T-cell (primary cell): ENCODE measurements at regions of chr1 and their contacts with region 1.

Region 1: DNA sequence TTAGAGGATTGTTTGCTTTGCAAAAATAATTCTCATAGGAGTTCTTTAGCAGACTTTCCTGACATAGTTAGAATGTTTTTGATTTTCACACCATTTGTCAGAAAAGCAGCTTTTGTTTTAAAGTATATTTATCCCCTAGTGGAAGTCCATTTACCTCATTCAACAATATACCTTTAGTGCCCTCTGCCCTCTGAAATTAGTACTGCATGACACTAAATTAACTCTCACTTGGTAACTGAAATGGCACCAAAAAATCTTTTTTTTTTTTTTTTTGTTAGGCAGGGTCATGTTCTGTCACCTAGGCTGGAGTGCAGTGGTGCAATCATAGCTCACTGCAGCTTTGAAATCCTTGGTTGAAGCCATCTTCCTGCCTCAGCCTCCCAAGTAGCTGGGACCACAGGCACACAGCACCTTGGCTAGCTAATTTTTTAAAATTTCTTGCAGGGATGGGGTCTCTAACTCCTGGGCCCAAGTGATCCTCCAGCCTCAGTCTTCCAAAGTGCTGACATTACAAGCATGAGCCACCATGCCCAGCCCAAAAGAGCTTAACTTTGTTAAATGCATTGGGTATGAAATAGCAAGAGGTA is 13.6 kb downstream of the LRRC42 start:
- DNase-seq: peak in 5 of 35 experiments; percentile 16 to 70 (median 24)
- ATAC-seq: peak in 3 of 4 experiments; percentile 46 to 74 (median 50)
- H3K4me3 ChIP-seq: no peak overlapping the region
- H3K4me3 Mint-ChIP-seq: no peak overlapping the region
- H3K27ac ChIP-seq: no peak overlapping the region
- H3K27ac Mint-ChIP-seq: no peak overlapping the region
- H3K4me1 ChIP-seq: no peaks in the 10 kb centered on the region
- H3K4me1 Mint-ChIP-seq: peaks cover 0 to 4% (median 2%) of the 10 kb centered on the region in 3 donors
- H3K27me3 ChIP-seq: no peaks in the 10 kb centered on the region
- H3K27me3 Mint-ChIP-seq: no peaks in the 10 kb centered on the region

Region 2: GRCh38 chr1:52636721-52637695 is 1322.7 kb before region 1 on chr1:
- CTCF ChIA-PET with region 1: no interaction called
- POLR2A ChIA-PET with region 1: no interaction called
- DNase-seq: peak; percentile 45 to 85 (median 65)
- ATAC-seq: peak; percentile 71 to 75 (median 72)
- H3K4me3 ChIP-seq: peak overlapping the region in 1 of 2 donors; percentile 22
- H3K4me3 Mint-ChIP-seq: peak overlapping the region; percentile 75 to 85 (median 83)
- H3K27ac ChIP-seq: peak overlapping the region; percentile 99
- H3K27ac Mint-ChIP-seq: peak overlapping the region; percentile 99 to 100
- H3K4me1 ChIP-seq: peaks cover 50 to 93% of the 10 kb centered on the region in 2 experiments
- H3K4me1 Mint-ChIP-seq: peaks cover 81 to 87% (median 83%) of the 10 kb centered on the region in 3 donors
- H3K27me3 ChIP-seq: no peaks in the 10 kb centered on the region
- H3K27me3 Mint-ChIP-seq: no peaks in the 10 kb centered on the region

Region 3: GRCh38 chr1:53860967-53861411 is 98.8 kb before region 1 on chr1:
- CTCF ChIA-PET with region 1: interaction called, 32 to 91 read pairs
- POLR2A ChIA-PET with region 1: no interaction called
- DNase-seq: peak in 34 of 35 experiments; percentile 5 to 78 (median 32)
- ATAC-seq: peak; percentile 50 to 75 (median 70)
- H3K4me3 ChIP-seq: no peak overlapping the region
- H3K4me3 Mint-ChIP-seq: no peak overlapping the region
- H3K27ac ChIP-seq: no peak overlapping the region
- H3K27ac Mint-ChIP-seq: no peak overlapping the region
- H3K4me1 ChIP-seq: no peaks in the 10 kb centered on the region
- H3K4me1 Mint-ChIP-seq: peaks cover 0 to 14% (median 7%) of the 10 kb centered on the region in 3 donors
- H3K27me3 ChIP-seq: no peaks in the 10 kb centered on the region
- H3K27me3 Mint-ChIP-seq: no peaks in the 10 kb centered on the region

Region 4: DNA sequence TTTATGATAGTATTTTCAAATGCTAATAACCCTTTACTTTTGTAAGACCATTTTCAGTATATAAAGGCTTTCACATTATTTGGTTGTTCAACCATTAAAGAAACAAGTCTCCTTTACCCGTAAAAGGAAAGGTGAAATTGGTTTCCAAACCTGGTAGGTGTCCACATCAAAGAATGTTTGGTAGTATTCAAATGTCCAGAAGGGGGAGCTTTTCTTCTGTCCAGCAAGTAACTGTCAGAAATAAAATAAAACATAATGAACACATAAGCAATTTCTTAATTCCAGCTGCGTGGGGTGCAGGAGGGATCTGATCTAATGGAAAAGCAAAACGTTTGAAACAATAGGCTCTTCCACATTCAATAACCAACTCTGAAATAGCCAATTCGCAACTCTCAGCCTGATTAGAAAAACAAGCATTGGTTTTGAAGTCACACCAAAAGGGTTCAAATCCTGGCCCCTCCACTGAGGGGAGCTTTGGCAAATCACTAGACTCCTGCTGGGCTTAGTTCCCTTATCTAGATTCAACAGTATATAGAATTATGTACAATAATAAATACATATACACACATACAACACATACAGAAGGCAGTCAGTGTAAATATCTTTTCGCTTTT is 81.2 kb before region 1 on chr1:
- CTCF ChIA-PET with region 1: interaction called, 6 to 10 read pairs
- POLR2A ChIA-PET with region 1: no interaction called
- DNase-seq: peak in 1 of 35 experiments; percentile 44
- ATAC-seq: no peak
- H3K4me3 ChIP-seq: no peak overlapping the region
- H3K4me3 Mint-ChIP-seq: no peak overlapping the region
- H3K27ac ChIP-seq: no peak overlapping the region
- H3K27ac Mint-ChIP-seq: no peak overlapping the region
- H3K4me1 ChIP-seq: no peaks in the 10 kb centered on the region
- H3K4me1 Mint-ChIP-seq: peaks cover 10 to 13% (median 11%) of the 10 kb centered on the region in 3 donors
- H3K27me3 ChIP-seq: no peaks in the 10 kb centered on the region
- H3K27me3 Mint-ChIP-seq: no peaks in the 10 kb centered on the region

Region 5: DNA sequence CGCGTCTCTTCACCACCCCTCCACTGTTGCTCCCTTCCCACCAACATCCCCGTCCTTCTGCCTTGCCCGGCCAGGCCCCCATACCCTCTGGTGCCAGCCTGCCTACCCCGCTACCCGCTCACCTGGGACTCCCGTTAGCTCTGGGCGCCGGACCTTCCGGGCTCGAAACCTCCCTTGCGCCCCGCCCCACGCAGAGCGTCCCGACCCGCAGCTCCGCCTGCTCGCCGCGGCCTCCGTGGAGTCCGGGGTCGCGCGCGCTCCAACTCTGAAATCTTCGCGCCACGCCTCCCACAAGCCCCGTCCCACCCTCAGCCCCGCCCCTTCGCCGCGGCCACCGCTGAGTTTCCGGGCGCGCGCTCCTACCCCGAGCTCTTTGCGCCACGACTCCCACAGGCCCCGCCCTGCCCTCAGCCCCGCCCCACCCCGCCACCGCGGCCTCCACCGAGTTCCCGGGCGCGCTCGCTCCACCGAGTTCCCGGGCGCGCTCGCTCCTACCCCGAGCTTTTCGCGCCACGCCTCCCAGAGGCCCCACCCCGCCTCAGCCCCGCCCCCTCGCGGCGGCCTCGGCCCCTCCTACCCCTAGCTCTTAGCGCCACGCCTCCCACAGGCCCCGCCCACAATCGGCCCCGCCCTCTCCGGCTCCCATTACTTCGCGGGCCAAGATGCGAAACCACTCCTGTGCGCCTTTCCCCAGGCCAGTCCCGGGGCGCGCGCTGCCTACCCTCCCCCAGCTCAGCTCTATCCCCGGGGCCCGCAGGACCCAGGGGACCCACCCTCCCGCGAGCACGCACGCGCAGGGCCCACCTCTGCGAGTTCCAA is 14.1 kb before region 1 on chr1 and contains the start of gene IFT25:
- CTCF ChIA-PET with region 1: interaction called, 3 to 47 read pairs
- POLR2A ChIA-PET with region 1: interaction called in 1 of 2 experiments, 7 read pairs
- DNase-seq: peak; percentile 93 to 100 (median 97)
- ATAC-seq: peak; percentile 77 to 84 (median 79)
- H3K4me3 ChIP-seq: peak within 1 kb of the TSS; percentile 76 to 84
- H3K4me3 Mint-ChIP-seq: peak within 1 kb of the TSS; percentile 93 to 96 (median 96)
- H3K27ac ChIP-seq: peak within 1 kb of the TSS; percentile 75
- H3K27ac Mint-ChIP-seq: peak within 1 kb of the TSS; percentile 91 to 94
- H3K4me1 ChIP-seq: peaks cover 7 to 29% of the 10 kb centered on the region in 2 experiments
- H3K4me1 Mint-ChIP-seq: peaks cover 47 to 57% (median 52%) of the 10 kb centered on the region in 3 donors
- H3K27me3 ChIP-seq: no peaks in the 10 kb centered on the region
- H3K27me3 Mint-ChIP-seq: no peaks in the 10 kb centered on the region
- total RNA-seq, gene IFT25: 24.5 to 33.1 (median 31.2) TPM

Region 6: DNA sequence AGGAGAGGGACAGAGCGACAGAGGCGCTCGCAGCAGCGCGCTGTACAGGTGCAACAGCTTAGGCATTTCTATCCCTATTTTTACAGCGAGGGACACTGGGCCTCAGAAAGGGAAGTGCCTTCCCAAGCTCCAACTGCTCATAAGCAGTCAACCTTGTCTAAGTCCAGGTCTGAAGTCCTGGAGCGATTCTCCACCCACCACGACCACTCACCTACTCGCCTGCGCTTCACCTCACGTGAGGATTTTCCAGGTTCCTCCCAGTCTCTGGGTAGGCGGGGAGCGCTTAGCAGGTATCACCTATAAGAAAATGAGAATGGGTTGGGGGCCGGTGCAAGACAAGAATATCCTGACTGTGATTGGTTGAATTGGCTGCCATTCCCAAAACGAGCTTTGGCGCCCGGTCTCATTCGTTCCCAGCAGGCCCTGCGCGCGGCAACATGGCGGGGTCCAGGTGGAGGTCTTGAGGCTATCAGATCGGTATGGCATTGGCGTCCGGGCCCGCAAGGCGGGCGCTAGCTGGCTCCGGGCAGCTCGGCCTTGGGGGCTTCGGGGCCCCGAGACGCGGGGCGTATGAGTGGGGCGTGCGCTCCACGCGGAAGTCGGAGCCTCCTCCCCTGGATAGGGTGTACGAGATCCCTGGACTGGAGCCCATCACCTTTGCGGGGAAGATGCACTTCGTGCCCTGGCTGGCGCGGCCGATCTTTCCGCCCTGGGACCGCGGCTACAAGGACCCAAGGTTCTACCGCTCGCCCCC is 240.2 kb after region 1 on chr1 and contains the starts of genes CYB5RL and MRPL37:
- CTCF ChIA-PET with region 1: interaction called in 1 of 2 experiments, 11 read pairs
- POLR2A ChIA-PET with region 1: no interaction called
- DNase-seq: peak; percentile 73 to 96 (median 88)
- ATAC-seq: peak; percentile 98 to 99 (median 99)
- H3K4me3 ChIP-seq: peak within 1 kb of the TSS; percentile 79 to 97
- H3K4me3 Mint-ChIP-seq: peak within 1 kb of the TSS; percentile 88 to 92 (median 90)
- H3K27ac ChIP-seq: peak within 1 kb of the TSS; percentile 8
- H3K27ac Mint-ChIP-seq: peak within 1 kb of the TSS; percentile 72 to 91
- H3K4me1 ChIP-seq: peaks cover 9 to 21% of the 10 kb centered on the region in 2 experiments
- H3K4me1 Mint-ChIP-seq: peaks cover 30 to 41% (median 37%) of the 10 kb centered on the region in 3 donors
- H3K27me3 ChIP-seq: no peaks in the 10 kb centered on the region
- H3K27me3 Mint-ChIP-seq: no peaks in the 10 kb centered on the region
- total RNA-seq, gene CYB5RL: 5.7 to 11.5 (median 10.0) TPM
- total RNA-seq, gene MRPL37: 27.4 to 45.7 (median 40.6) TPM